PC-3 (cell line): ENCODE measurements at regions of chr10 and their contacts with region 1.

Region 1: GRCh38 chr10:43374194-43374593 is 2.8 kb downstream of the FXYD4 start:
- DNase-seq: no peak
- ATAC-seq: no peak
- H3K4me3 ChIP-seq: no peak overlapping the region
- H3K27ac ChIP-seq: no peak overlapping the region
- H3K4me1 ChIP-seq: no peaks in the 10 kb centered on the region
- H3K27me3 ChIP-seq: no peaks in the 10 kb centered on the region
- CTCF ChIP-seq: no peak

Region 2: GRCh38 chr10:43026011-43026973 is 347.9 kb before region 1 on chr10:
- CTCF ChIA-PET with region 1: no interaction called
- POLR2A ChIA-PET with region 1: interaction called, 19 read pairs
- intact Hi-C with region 1: no loop called
- DNase-seq: peak; percentile 86
- ATAC-seq: peak; percentile 57
- H3K4me3 ChIP-seq: peak overlapping the region; percentile 47
- H3K27ac ChIP-seq: no peak overlapping the region
- H3K4me1 ChIP-seq: peaks cover 14% of the 10 kb centered on the region
- H3K27me3 ChIP-seq: peaks cover 11% of the 10 kb centered on the region
- CTCF ChIP-seq: no peak

Region 3: DNA sequence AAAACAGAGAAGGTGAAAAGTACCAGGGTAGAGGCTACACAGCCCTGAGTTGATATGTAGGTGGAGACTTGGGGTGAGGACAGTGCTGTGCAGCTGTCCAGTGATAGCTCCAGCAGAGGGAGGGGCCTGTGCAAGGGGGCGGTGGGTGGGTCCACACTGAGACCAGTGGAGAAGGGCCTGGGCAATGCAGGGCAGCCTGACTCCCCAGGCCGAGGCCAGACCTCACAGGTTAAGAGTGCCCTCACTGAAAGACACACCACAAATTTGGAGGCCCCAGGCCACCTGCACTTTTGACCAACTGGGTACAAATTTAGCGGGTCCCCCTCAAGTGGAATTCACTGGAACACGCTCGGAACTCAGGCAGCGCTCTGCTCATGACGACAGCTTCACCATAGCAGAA is 100.7 kb before region 1 on chr10:
- CTCF ChIA-PET with region 1: no interaction called
- POLR2A ChIA-PET with region 1: no interaction called
- intact Hi-C with region 1: no loop called
- DNase-seq: no peak
- ATAC-seq: no peak
- H3K4me3 ChIP-seq: no peak overlapping the region
- H3K27ac ChIP-seq: no peak overlapping the region
- H3K4me1 ChIP-seq: no peaks in the 10 kb centered on the region
- H3K27me3 ChIP-seq: peaks cover 77% of the 10 kb centered on the region
- CTCF ChIP-seq: no peak

Region 4: GRCh38 chr10:43348511-43349312 is 25.5 kb before region 1 on chr10:
- CTCF ChIA-PET with region 1: no interaction called
- POLR2A ChIA-PET with region 1: no interaction called
- intact Hi-C with region 1: no loop called
- DNase-seq: peak; percentile 91
- ATAC-seq: peak; percentile 99
- H3K4me3 ChIP-seq: no peak overlapping the region
- H3K27ac ChIP-seq: no peak overlapping the region
- H3K4me1 ChIP-seq: peaks cover 28% of the 10 kb centered on the region
- H3K27me3 ChIP-seq: no peaks in the 10 kb centered on the region
- CTCF ChIP-seq: peak; percentile 99

Region 5: DNA sequence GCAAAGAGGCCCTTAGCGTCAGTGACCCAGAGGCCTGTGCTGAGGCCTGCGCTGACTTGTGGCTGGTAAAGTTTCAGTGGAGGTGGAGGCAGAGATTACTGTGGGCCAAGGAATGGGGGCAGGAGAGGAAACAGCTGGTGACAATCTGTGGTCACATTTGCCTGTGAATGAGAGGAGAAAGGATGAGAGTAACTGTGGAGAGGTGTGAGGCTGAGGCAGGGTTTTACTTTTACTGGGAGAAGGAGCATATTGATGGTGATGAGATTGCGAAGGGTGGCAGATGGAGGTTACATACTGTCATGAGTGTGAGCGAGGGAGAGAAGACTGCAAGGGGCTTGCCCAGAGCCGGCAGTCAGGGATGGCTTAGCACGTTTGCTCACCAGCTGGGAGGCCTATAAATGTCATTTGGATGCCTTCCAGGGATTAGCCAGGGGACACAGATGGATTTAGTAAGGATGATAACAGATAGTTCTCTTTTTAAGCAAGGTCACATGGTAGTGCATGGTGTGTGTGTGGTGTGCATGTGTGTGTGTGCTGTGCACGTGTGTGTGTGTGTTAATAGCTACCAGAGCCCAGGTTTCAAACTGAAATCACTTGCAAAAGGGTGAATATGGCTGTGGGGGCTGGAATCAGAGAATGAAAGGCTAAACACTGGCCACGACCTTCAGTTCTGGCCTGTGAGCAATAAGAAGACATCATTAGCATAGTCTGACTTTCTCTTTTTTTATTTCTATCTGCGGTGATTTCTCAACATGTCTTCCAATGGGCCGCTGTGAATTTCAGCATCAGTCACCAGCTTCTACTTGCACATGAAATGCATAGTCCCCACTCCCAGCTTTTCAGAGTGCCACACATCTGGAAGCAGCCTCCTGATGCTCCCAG is 566.0 kb after region 1 on chr10:
- CTCF ChIA-PET with region 1: no interaction called
- POLR2A ChIA-PET with region 1: no interaction called
- intact Hi-C with region 1: no loop called
- DNase-seq: no peak
- ATAC-seq: no peak
- H3K4me3 ChIP-seq: no peak overlapping the region
- H3K27ac ChIP-seq: no peak overlapping the region
- H3K4me1 ChIP-seq: no peaks in the 10 kb centered on the region
- H3K27me3 ChIP-seq: no peaks in the 10 kb centered on the region
- CTCF ChIP-seq: no peak